Dendritic cell treated with granulocyte-macrophage colony-stimulating factor and Interleukin-4, amounts not matched to agents 40 ng/mL and 50 ng/mL, for 4 days (primary cell): ENCODE measurements at regions of chr1 and their contacts with region 1.

Region 1: GRCh38 chr1:186828611-186829454 is at the start of gene PLA2G4A:
- H3K4me3 Mint-ChIP-seq: peak within 1 kb of the TSS; percentile 79
- H3K27ac Mint-ChIP-seq: peak within 1 kb of the TSS; percentile 88
- H3K4me1 Mint-ChIP-seq: peaks cover 14% of the 10 kb centered on the region
- H3K27me3 Mint-ChIP-seq: no peaks in the 10 kb centered on the region

Region 2: DNA sequence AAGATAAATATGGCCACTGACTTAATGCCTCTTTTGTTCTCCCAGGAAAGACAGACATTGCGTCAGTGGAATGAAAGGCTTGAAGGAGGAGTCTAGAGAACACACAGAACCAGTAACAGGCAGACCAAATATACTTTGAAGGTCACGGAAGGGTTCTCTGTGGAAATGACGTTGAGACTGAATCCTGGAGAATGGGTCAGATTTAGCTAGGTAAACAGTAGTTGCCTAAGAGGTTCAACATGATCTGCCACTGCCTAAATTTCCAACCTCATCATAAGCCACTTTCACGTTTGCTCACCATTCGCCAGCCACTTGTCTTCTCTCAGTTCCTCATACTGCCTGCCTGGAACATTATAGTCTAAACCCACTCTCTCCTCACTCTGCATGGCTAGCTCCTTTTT is 20.4 kb after region 1 on chr1:
- intact Hi-C with region 1: loop called (anchors 2 kb)
- H3K4me3 Mint-ChIP-seq: peak overlapping the region; percentile 45
- H3K27ac Mint-ChIP-seq: peak overlapping the region; percentile 82
- H3K4me1 Mint-ChIP-seq: peaks cover 44% of the 10 kb centered on the region
- H3K27me3 Mint-ChIP-seq: no peaks in the 10 kb centered on the region

Region 3: DNA sequence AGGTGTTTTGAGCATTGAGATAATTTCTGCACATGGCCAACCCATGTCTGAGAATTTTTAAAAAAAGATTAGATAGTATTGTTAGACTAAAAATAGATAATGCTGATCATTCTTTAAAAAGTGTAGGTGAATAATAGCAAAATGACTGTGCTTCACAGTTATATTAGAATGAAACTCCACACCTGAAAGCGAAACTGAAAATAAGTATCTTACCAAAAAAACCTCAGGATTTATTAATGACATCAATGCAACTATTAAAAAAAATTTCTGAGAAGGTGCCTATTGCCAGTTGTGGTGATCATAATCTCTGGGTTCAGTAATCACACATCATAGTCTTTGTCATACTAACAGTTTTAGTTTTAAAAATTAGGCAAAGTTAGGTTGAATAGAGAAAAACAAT is 36.4 kb after region 1 on chr1:
- intact Hi-C with region 1: no loop called
- H3K4me3 Mint-ChIP-seq: no peak overlapping the region
- H3K27ac Mint-ChIP-seq: no peak overlapping the region
- H3K4me1 Mint-ChIP-seq: peaks cover 15% of the 10 kb centered on the region
- H3K27me3 Mint-ChIP-seq: no peaks in the 10 kb centered on the region

Region 4: DNA sequence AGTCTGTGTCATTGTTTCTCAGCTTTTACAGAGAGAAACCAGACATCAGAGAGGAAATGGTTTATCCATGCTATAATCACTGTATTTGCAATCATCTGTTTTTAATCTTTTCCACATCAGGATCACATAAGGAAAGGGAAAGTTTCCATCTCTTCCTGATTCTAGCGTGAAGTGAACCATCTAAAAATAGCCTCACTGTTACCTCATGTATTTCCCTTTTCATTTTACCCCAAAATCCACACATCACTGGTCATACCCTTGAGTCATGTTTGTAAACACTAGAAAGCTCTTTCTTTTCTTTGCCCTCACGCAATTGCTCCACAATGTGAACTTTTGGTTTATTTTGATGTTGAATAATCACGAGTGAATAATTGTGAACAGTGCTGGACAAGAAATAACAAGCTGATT is 145.9 kb after region 1 on chr1:
- intact Hi-C with region 1: loop called (anchors 10 kb)
- H3K4me3 Mint-ChIP-seq: no peak overlapping the region
- H3K27ac Mint-ChIP-seq: no peak overlapping the region
- H3K4me1 Mint-ChIP-seq: peaks cover 37% of the 10 kb centered on the region
- H3K27me3 Mint-ChIP-seq: no peaks in the 10 kb centered on the region